ENCODE measurements at regions of chr9 and their contacts with region 1.

Region 1: DNA sequence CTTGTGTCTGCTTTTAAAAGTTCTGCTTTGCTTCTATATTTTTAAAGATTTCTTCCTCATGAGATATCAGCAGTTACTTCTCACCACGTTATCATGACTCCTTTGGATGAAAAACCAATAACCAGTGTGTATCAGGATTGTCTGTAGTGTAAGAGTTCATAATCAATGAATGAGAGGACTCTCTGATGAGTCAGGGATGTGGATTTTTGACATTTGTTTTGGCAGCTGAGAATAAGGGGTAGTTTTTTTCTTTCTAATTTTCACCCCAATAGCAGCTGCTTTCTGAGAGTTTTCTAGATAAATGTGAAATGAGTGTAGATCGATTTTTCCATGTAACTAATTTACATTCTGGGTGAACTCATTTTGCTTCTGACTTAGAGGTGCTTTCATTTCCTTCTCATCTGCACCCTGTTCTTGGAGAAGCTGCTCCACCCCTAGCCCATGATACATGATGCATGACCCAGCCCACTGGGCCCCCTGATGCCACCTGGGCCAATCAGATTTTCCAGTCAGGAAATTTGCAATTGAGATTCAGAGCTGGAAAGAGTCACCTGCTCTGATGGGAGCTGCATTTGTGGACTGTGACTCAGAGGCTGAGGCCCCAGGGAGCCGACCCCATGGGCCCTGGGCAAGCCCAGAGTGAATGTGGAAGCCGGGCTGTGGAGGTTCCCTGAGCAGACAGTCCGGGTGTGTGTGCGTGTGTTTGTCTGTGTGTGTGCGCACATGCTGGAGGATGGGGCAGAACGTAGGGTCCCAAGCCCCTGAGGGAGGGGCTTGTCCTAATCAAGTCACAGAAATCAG is 159.3 kb downstream of the RGS3 start:
- DNase-seq: peak; percentile 82
- H3K4me3 ChIP-seq: no peak overlapping the region
- H3K27ac ChIP-seq: peak overlapping the region; percentile 100
- H3K4me1 ChIP-seq: peaks cover 53% of the 10 kb centered on the region
- H3K27me3 ChIP-seq: no peaks in the 10 kb centered on the region
- CTCF ChIP-seq: no peak
- POLR2A ChIP-seq: no peak

Region 2: DNA sequence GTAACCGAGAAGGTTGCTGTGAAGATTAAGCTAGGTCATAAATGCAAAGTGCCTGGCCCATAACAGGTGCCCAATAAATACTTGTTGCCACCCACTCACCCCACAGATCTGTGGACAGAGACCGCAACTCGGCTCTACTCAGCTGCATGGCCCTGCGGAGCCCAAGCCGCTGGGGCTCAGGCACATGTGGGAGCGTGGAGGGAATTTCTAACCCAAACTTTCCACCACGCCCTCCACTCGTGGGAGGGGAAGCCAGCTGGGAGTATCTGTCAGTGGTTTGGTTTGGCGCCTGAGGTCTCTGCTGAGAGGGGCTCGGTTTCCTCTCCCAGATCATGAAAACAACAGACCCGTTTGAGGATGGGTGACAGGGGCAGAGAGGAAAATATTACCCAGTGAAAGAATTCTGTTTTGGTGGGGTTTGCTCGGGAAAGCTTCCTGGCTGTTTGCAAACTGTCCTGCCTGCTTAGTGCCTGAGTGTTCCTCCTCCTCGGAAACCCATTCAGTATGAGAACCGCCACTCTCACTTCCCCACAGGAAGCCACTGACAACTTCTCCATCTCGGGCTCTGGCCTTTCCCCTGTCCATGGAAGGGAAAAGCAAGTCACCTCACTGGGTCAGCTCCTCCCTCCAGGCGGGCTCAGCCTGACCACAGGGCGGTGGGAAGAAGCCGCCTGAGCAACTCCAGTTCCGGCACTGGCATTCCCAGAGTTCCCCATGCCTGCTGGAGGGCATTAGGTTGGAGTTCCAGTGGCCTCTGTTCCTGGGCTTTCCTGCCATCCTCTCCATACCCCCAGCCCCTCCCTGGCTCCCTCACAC is 99.2 kb before region 1 on chr9:
- CTCF ChIA-PET with region 1: no interaction called
- POLR2A ChIA-PET with region 1: no interaction called
- dilution Hi-C with region 1: no loop called
- intact Hi-C with region 1: no loop called
- DNase-seq: peak; percentile 85
- H3K4me3 ChIP-seq: no peak overlapping the region
- H3K27ac ChIP-seq: peak overlapping the region; percentile 80
- H3K4me1 ChIP-seq: peaks cover 65% of the 10 kb centered on the region
- H3K27me3 ChIP-seq: no peaks in the 10 kb centered on the region
- CTCF ChIP-seq: no peak
- POLR2A ChIP-seq: peak; percentile 21

Region 3: GRCh38 chr9:113602126-113603044 is 20.4 kb before region 1 on chr9:
- CTCF ChIA-PET with region 1: interaction called, 12 read pairs
- POLR2A ChIA-PET with region 1: interaction called, 45 read pairs
- dilution Hi-C with region 1: no loop called
- intact Hi-C with region 1: loop called (anchors 1 kb)
- DNase-seq: peak; percentile 63
- H3K4me3 ChIP-seq: no peak overlapping the region
- H3K27ac ChIP-seq: no peak overlapping the region
- H3K4me1 ChIP-seq: peaks cover 45% of the 10 kb centered on the region
- H3K27me3 ChIP-seq: no peaks in the 10 kb centered on the region
- CTCF ChIP-seq: no peak
- POLR2A ChIP-seq: no peak

Region 4: DNA sequence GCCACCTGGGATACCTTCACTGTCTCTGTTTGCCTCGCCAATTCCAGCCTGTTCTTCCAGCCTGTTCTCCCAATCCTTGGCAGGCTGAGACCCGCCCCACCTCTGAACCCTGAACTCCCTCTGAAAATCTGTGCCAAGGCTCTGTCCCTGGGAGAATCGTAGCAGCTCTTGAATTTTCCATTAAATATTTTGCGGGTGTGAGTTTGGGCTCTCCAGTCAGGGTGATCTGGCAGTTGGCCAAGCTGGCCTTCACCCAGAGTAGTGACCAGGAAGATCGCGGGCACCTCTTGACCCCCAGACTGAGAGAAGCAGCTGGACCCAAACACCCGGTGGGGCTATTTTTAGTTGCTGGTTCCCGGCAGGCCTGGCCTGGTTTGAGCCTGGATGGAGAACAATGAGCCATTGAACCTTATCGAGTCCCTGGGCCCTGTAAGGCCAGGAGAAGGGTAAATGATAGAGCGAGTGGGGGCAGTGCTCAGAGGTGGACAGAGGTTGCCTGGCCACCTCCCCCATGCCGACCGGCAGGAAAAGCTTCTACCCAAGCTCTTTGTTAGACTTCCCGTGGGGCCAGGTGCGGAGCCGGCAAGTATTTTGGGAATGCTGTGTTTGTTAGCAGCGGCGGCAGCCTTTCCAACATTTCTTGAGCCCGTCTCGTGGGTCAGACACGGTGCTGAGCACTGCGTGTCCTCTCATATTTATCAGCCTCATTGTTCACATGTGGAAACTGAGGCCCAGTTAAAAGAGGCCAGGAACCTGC is 13.1 kb before region 1 on chr9:
- CTCF ChIA-PET with region 1: interaction called, 7 read pairs
- POLR2A ChIA-PET with region 1: interaction called, 45 read pairs
- dilution Hi-C with region 1: no loop called
- intact Hi-C with region 1: loop called (anchors 1 kb)
- DNase-seq: peak; percentile 96
- H3K4me3 ChIP-seq: no peak overlapping the region
- H3K27ac ChIP-seq: peak overlapping the region; percentile 98
- H3K4me1 ChIP-seq: peaks cover 26% of the 10 kb centered on the region
- H3K27me3 ChIP-seq: no peaks in the 10 kb centered on the region
- CTCF ChIP-seq: no peak
- POLR2A ChIP-seq: no peak

Region 5: GRCh38 chr9:113632776-113633590 is 10.2 kb after region 1 on chr9:
- CTCF ChIA-PET with region 1: interaction called, 9 read pairs
- POLR2A ChIA-PET with region 1: no interaction called
- dilution Hi-C with region 1: no loop called
- intact Hi-C with region 1: loop called (anchors 1 kb)
- DNase-seq: no peak
- H3K4me3 ChIP-seq: no peak overlapping the region
- H3K27ac ChIP-seq: no peak overlapping the region
- H3K4me1 ChIP-seq: peaks cover 22% of the 10 kb centered on the region
- H3K27me3 ChIP-seq: no peaks in the 10 kb centered on the region
- CTCF ChIP-seq: no peak
- POLR2A ChIP-seq: no peak

Region 6: DNA sequence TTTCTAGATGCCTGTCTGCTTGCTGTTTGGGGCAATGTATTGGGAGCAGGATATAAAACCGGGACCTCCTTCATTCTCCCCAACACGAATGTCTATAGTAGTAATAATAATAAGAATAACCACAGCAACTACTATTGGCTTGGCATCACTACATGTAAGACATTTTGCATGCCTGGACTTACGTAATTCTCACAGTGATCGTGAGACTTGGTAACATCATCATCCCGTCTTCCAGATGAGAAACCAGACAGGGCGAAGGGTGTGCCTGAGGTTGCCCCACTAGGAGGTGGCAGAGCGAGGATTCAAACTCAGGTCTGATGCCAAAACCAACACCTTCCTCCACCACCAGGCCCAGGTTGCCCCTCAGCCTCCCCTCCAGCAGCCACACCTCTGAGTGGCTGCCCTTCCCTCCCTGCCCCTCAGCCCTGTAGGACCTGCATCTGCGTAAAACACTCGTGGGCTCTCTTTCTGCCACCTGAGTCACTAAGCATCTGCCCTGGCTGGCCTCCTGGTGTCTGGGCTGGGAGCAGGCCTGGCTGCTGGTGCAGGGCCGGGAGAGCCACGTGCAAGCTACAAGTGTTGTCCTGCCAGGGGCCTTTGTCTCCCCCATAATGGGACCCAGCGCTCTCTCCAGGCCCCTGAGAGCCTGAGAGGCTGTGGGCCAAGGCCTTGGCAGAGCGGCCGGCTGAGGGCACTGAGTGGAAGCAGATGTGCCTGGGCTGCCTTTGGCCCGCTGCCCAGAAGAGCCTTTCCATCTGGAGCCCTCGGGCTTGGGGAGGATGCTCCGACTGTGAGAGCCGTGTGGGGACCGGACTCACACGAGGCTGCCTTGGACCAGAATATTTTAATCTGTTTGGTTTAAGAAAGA is 26.0 kb after region 1 on chr9:
- CTCF ChIA-PET with region 1: interaction called, 7 read pairs
- POLR2A ChIA-PET with region 1: interaction called, 7 read pairs
- dilution Hi-C with region 1: no loop called
- intact Hi-C with region 1: loop called (anchors 1 kb)
- DNase-seq: peak; percentile 64
- H3K4me3 ChIP-seq: no peak overlapping the region
- H3K27ac ChIP-seq: no peak overlapping the region
- H3K4me1 ChIP-seq: peaks cover 21% of the 10 kb centered on the region
- H3K27me3 ChIP-seq: no peaks in the 10 kb centered on the region
- CTCF ChIP-seq: no peak
- POLR2A ChIP-seq: no peak

Region 7: DNA sequence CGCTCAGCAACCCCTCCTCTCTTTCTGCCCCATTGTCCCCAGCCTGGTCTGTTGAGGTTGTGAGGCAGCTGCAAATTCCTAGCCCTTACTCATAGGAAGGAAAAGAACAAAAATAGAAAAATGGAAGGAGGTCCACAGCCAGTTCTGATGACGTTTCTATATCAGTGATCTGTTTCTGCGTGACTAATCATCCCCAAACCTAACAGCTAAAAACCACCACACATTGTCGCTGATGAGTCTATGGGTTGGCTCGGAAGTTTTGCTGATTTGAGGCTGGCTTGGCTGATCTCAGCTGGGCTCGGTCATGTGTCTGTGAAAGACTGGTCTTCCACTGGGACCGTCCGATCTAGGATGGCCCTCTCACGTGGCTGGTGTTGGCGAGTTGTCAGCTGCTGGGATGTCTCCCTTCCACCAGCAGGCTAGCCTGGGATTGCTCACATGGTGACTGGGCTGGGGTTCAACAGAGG is 52.7 kb after region 1 on chr9:
- CTCF ChIA-PET with region 1: no interaction called
- POLR2A ChIA-PET with region 1: no interaction called
- dilution Hi-C with region 1: no loop called
- intact Hi-C with region 1: loop called (anchors 1 kb)
- DNase-seq: peak; percentile 99
- H3K4me3 ChIP-seq: no peak overlapping the region
- H3K27ac ChIP-seq: peak overlapping the region; percentile 83
- H3K4me1 ChIP-seq: peaks cover 30% of the 10 kb centered on the region
- H3K27me3 ChIP-seq: no peaks in the 10 kb centered on the region
- CTCF ChIP-seq: no peak
- POLR2A ChIP-seq: peak; percentile 64